HEK293T (cell line): ENCODE measurements at regions of chr11 and their contacts with region 1.

Region 1: DNA sequence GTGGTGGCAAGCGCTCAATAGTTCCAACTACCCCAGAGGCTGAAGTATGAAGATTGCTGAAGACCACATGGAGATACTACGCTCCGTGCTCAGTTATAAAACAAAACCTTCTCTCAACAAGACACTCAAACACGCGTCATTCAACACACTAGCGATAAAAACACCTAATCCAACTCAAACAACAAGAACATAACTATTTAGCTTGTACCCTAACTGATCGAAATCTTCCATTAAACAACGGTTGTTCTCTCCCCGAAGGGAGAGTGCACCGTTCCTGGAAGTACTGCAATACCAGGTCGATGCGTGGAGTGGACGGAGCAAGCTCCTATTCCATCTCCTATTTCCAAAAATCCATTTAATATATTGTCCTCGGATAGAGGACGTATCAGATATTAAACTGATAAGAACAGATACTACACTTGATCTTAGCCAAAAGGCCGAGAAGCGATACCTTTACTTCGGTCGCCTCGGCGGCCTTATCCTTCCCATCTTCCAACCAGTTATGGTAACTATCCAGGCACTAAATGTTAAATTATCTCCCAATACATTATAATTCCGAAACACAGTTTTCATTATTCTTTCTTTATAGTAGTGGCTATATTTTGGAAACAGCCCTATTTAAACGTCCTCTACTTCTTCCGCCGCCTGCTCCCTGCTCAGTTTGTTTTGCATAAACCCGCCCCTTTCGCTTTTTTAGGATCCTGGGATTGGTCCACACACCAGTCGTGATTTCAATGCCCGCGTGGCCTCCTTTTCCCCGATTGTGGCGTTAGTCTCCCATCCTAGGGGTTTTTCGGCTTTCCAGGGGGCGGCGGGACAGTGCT is 2.2 kb upstream of the WDR74 start:
- DNase-seq: peak; percentile 89

Region 2: GRCh38 chr11:62601394-62602140 is 240.0 kb before region 1 on chr11 and contains the start of gene MTA2:
- CTCF ChIA-PET with region 1: no interaction called
- POLR2A ChIA-PET with region 1: no interaction called
- DNase-seq: peak; percentile 97

Region 3: DNA sequence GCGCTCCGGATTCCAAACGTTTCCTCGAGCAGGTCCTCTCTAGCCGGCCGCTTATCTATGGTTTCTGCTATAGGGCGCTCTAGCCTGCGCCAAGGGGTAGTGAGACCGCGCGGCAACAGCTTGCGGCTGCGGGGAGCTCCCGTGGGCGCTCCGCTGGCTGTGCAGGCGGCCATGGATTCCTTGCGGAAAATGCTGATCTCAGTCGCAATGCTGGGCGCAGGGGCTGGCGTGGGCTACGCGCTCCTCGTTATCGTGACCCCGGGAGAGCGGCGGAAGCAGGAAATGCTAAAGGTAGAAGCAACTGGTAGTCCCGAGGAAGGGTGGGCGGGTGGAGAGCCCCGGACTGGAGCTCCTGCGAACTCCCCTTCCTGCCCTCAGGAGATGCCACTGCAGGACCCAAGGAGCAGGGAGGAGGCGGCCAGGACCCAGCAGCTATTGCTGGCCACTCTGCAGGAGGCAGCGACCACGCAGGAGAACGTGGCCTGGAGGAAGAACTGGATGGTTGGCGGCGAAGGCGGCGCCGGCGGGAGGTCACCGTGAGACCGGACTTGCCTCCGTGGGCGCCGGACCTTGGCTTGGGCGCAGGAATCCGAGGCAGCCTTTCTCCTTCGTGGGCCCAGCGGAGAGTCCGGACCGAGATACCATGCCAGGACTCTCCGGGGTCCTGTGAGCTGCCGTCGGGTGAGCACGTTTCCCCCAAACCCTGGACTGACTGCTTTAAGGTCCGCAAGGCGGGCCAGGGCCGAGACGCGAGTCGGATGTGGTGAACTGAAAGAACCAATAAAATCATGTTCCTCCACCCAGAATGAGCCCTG is 169.8 kb before region 1 on chr11 and contains the starts of genes LBHD1 and UQCC3:
- CTCF ChIA-PET with region 1: interaction called, 3 read pairs
- POLR2A ChIA-PET with region 1: interaction called, 18 read pairs
- DNase-seq: peak; percentile 62

Region 4: DNA sequence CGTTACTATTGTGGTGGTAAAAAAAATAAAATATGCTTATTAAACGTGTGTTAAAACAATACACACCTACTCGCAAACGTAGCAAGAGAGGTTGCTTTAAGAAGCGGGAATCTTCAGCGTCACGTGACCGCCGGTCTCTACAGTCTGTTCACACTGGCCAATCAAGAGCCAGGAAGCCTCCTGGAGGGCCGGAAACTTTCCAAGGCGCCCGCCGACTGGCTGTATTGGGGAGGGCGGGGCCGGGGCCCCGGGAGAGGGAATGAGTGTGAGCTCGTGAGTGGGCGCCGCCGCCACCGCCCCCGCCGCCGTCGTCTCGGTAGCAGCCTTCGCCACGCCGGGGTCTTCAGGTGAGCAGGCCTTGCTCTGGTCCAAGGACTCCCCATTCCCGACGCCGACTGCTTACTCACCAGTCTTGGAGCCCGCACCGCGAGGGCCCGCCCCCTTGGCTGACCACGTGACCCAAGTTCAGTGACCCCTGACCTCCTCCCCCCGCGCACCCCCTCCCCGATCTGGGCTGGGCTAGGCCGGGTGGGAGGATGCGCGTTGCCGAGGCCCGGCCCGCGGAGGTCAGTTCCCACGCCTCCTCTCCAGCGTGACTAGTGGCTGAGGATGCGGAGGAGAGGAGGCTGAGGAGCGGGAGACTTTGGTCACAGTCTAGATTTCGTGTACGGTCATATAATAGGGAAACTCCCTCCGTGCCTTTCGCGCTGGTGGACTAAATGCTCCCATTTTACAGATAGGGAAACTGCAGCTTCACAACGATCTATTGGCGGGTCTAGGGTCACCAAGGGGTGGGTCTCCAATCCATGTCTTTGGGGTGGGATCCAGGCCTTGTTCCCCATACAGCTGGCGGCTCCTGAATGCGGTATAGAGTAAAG is 70.2 kb before region 1 on chr11 and contains the start of gene TAF6L:
- CTCF ChIA-PET with region 1: no interaction called
- POLR2A ChIA-PET with region 1: interaction called, 23 read pairs
- DNase-seq: peak; percentile 92

Region 5: DNA sequence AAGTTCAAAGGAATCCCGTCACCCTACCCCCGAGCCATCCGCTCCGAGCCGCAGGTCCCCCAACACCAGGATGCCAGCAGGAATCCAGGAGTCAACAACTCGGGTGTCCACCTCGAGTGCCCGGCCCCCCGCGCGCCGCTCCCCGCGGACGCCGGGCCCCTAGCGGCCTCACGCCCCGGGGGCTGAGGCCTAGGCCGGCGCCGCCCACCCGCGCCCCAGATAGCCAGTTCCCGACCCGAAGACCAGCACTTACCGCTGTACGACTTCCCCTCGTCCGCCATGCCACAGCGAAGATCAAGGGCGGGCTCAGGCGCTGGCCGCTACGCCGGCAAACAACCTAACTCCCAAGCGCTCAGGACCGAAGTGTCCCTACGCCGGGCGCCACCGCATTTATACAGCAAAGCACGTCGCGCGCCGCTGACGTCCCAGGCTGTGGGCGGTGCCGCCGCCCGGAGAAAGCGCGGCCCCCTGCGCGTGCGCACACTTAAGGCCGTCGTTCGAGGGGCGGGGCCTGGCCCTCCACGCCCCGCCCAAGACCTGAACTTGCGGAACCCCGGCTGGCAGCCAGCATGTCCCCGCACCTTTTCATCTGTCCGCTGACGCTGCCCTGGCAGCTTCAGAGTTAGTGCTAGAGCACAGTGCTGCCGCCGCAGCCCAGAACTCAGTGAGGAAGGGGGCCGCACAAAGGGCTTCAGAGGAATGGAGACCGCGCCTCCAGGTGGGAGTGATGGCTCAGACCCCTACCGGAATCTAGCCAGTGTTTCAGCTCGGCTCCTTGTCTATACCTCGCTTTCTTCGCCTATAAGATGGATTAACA is 36.3 kb before region 1 on chr11 and contains the start of gene NXF1:
- CTCF ChIA-PET with region 1: no interaction called
- POLR2A ChIA-PET with region 1: interaction called, 43 read pairs
- DNase-seq: peak; percentile 99

Region 6: GRCh38 chr11:62855571-62856332 is 14.2 kb after region 1 on chr11:
- CTCF ChIA-PET with region 1: no interaction called
- POLR2A ChIA-PET with region 1: interaction called, 331 read pairs
- DNase-seq: peak; percentile 98

Region 7: DNA sequence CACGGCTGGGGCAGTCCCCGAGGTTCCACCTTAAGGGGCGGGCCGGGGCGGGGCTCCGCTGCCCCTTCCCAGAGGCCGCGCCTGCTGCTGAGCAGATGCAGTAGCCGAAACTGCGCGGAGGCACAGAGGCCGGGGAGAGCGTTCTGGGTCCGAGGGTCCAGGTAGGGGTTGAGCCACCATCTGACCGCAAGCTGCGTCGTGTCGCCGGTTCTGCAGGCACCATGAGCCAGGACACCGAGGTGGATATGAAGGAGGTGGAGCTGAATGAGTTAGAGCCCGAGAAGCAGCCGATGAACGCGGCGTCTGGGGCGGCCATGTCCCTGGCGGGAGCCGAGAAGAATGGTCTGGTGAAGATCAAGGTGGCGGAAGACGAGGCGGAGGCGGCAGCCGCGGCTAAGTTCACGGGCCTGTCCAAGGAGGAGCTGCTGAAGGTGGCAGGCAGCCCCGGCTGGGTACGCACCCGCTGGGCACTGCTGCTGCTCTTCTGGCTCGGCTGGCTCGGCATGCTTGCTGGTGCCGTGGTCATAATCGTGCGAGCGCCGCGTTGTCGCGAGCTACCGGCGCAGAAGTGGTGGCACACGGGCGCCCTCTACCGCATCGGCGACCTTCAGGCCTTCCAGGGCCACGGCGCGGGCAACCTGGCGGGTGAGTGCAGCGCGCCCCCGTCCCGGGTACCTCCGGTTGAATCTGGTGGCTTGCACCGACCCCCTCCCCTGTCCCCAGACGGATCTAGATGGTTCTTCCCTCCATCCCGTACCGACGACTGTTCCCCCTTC is 39.4 kb after region 1 on chr11 and contains the start of gene SLC3A2:
- CTCF ChIA-PET with region 1: no interaction called
- POLR2A ChIA-PET with region 1: interaction called, 110 read pairs
- DNase-seq: peak; percentile 82